A549 (cell line): ENCODE measurements at regions of chr17 and their contacts with region 1.

Region 1: GRCh38 chr17:28710861-28711722 is 596 bp downstream of the PROCA1 start:
- DNase-seq: peak; percentile 92 to 97
- ATAC-seq: peak; percentile 81 to 94
- H3K4me3 ChIP-seq: peak overlapping the region; percentile 53
- H3K27ac ChIP-seq: peak overlapping the region; percentile 82 to 92
- H3K4me1 ChIP-seq: peaks cover 17% of the 10 kb centered on the region
- CTCF ChIP-seq: no peak
- EP300 ChIP-seq: no peak
- POLR2A ChIP-seq: peak; percentile 81
- RAD21 ChIP-seq: no peak

Region 2: GRCh38 chr17:28684963-28685362 is 26.1 kb before region 1 on chr17:
- CTCF ChIA-PET with region 1: interaction called, 335 read pairs
- POLR2A ChIA-PET with region 1: interaction called, 4 read pairs
- DNase-seq: peak; percentile 63 to 86
- ATAC-seq: peak; percentile 81 to 87
- H3K4me3 ChIP-seq: no peak overlapping the region
- H3K27ac ChIP-seq: no peak overlapping the region
- H3K4me1 ChIP-seq: no peaks in the 10 kb centered on the region
- CTCF ChIP-seq: peak; percentile 58
- EP300 ChIP-seq: no peak
- POLR2A ChIP-seq: no peak
- RAD21 ChIP-seq: peak; percentile 79 to 80